ENCODE measurements at regions of chr1 and their contacts with region 1.

Region 1: GRCh38 chr1:203038891-203039608 is 12.8 kb downstream of the PPFIA4 start:
- DNase-seq: peak; percentile 87
- ATAC-seq: peak; percentile 85

Region 2: DNA sequence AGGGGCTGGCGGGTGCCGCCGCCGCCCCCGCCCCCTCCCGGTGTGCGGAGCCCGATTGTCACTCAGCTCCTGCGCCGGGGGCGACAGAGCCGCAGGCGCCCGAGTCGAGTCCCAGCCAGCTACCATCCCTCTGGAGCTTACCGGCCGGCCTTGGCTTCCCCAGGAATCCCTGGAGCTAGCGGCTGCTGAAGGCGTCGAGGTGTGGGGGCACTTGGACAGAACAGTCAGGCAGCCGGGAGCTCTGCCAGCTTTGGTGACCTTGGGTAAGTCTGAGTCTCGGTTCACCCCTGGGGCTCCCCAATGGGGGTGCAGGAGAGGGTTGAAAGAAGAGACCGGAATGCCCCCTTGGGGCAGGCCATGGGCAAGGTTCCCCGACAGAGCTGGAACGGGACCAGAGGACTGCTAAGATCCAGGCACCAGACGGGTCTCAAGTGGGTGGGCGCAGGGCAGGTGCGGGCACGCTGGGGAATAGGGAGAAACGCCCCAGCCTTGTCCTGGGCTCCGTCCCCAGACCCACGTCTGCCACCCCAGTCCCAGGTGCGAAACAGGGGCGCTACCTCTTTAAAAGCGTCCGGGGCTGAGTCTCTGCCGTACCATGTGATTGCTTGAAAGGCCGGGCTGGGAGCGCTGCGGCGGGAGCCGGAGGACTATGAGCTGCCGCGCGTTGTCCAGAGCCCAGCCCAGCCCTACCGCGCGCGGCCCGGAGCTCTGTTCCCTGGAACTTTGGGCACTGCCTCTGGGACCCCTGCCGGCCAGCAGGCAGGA is 88.8 kb after region 1 on chr1 and contains the start of gene ADORA1:
- intact Hi-C with region 1: loop called (anchors 5 kb)
- DNase-seq: no peak
- ATAC-seq: peak; percentile 88
- total RNA-seq, gene ADORA1: 19.0 TPM

Region 3: DNA sequence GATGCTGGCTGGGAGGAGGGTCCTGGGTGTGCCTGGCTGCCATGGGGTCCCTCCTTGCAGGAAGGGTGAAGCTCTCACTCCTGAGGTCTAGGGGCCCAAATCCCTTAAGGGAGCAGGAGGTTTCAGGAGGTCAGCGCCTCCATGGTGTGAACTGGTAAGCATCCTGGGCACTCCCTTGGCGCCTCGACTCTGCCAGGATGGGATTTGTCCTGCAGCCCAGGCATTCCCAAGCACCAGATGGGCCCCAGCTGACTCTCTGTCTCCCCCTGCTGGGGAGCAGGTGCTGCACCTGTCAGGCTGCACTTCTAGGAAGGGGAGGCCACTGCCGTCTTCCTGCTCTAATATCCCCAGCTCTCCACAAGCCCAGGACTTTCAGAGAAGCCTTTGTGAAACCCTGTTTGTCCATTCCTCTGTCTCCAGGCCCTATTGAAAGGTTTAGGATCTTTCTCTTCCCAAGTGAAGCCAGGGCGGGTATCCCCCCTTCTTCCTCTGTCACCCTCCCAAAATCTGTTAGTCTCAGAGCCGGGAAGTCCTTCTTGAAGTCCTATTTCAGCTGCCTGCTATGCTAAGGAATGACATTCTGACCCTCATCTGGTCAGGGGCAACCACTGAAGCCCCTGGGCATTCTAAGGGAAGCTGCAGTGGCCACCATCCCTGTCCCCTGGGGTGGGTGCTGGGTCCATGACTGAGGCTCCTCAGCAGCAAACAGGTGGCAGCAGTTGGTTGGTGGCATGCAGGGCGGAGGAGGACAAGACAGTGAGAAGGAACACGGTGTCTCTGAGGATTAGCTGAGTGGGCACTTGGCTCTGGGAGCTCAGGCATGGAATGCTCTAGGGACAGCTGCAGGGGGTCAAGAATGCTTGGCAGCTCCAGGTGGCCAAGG is 133.3 kb after region 1 on chr1:
- intact Hi-C with region 1: loop called (anchors 1 kb)
- DNase-seq: peak; percentile 72
- ATAC-seq: peak; percentile 53

Region 4: DNA sequence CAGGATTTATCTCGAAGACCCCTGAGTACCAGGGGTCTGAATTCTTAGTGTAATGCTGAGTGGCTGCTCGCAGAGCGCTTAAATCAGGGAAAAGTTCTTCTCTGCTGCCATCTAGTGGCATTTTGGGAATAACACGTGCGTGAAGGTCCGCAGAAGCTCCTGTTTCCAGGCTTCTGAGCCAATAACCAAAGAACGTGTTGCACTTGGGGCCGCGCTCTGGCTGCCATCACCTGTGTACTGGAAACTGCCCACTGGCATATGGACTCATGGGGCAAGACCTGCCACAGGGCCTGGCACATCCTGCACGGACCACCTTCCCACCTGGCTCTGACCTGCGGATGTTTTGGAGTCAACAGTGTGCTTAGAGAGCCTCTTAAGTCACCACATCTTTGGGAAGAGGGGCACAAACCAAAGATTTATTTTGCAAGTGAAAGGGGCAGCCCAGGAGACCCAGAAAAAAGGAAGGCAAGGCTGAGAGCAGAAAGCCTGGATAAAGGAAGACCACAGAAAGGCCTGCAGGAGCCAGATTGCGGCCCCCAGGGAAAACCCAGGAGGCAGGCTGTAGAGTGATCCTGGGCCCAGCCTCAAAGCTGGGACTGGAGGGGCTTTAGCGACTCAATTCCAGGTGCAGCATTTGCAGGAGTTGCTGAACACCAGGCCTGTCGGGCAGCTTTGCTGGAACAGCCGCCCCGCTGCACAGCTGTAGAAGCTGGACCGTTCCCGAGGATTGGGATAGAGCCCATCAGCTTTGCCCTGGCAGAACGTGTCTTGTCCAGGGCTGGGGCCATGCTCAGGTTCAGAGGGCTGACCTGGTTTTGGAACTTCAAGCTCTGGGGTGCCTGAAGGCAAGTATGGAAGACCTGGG is 177.5 kb after region 1 on chr1:
- intact Hi-C with region 1: loop called (anchors 1 kb)
- DNase-seq: no peak
- ATAC-seq: peak; percentile 63

Region 5: GRCh38 chr1:203267347-203267846 is 228.3 kb after region 1 on chr1:
- intact Hi-C with region 1: loop called (anchors 1 kb)
- DNase-seq: peak; percentile 86
- ATAC-seq: peak; percentile 75

Measured in Right ventricle myocardium inferior (tissue), 1 donor.